Heart left ventricle (tissue), 16 donors: ENCODE measurements at regions of chr17 and their contacts with region 1.

Region 1: GRCh38 chr17:60874772-60875171 is 197.1 kb downstream of the BCAS3 start:
- DNase-seq: no peak
- ATAC-seq: no peak
- H3K4me3 ChIP-seq: no peak overlapping the region
- H3K27ac ChIP-seq: no peak overlapping the region
- H3K4me1 ChIP-seq: no peaks in the 10 kb centered on the region
- H3K27me3 ChIP-seq: no peaks in the 10 kb centered on the region
- CTCF ChIP-seq: no peak
- POLR2A ChIP-seq: no peak

Region 2: DNA sequence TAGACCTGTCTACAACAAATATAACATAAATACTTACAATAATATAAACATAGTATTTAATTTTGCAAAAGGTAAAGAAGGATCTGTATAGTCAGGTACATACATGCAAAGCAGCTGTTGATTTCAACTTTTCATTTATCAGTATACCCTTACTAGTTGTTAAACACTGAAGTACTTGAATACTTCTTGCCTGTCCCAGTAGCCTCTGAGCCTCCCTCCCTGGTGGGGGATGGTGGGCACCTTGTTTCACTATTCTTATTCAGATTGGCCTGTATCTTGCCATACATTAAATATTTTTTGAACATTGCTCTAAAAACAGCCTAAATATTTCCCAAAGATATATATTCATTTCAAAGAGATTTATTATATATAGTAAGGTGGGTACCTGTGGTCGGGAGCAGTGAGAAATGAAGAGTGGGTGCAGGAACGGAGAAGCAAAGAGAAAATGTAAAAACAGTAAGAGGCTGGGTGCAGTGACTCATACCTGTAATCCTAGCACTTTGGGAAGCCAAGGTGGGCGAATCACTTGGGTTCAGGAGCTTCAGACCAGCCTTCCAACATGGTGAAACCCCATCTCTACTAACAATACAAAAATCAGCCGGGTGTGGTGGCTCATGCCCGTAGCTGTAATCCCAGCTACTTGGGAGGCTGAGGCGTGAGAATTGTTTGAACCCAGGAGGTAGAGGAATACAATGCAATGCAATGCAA is 59.8 kb after region 1 on chr17:
- intact Hi-C with region 1: loop called in 1 of 10 experiments (anchors 10 kb)
- DNase-seq: no peak
- ATAC-seq: no peak
- H3K4me3 ChIP-seq: no peak overlapping the region
- H3K27ac ChIP-seq: no peak overlapping the region
- H3K4me1 ChIP-seq: no peaks in the 10 kb centered on the region
- H3K27me3 ChIP-seq: no peaks in the 10 kb centered on the region
- CTCF ChIP-seq: no peak
- POLR2A ChIP-seq: no peak